Posterior vena cava (tissue), 2 donors: ENCODE measurements at regions of chr2 and their contacts with region 1.

Region 1: GRCh38 chr2:189751080-189751658 is 11.4 kb downstream of the OSGEPL1 start:
- DNase-seq: no peak

Region 2: DNA sequence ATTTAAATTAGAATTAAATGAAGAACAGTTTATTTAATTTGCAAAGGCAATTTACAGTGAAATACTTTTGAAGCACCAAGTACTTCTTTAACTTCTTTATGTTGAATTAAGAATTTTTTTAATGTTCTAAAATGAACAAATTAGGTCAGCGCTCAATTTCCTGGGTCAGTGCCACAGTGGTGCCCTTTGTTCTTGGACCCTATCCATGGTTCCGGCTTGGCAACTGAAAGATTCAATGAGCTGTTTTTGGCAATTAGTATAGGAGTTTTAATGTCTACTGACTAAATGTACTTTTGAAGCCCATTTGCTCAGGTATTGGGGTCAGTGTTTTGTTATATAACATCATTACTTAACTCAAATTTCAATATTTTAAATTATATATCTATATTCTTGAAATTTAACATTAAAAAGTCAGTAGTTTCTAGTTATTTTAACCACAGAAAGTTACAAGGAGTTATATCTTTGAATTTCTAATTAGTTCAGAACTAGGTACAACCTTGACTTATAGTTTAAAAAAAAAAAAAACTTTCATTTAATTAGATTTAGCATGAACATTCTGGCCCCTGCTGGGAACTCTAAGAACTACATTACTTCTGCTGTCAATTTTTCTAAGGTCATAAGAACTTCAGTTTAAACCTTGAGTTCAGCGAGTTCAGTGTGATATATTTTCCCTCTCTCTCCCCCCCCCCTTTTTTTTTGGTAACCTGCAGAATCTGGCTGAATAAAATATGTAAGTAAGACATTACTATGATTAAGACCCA is 318.9 kb after region 1 on chr2:
- intact Hi-C with region 1: loop called in 1 of 2 experiments (anchors 5 kb)
- DNase-seq: no peak